Right ventricle myocardium superior (tissue), 1 donor: ENCODE measurements at regions of chr12 and their contacts with region 1.

Region 1: DNA sequence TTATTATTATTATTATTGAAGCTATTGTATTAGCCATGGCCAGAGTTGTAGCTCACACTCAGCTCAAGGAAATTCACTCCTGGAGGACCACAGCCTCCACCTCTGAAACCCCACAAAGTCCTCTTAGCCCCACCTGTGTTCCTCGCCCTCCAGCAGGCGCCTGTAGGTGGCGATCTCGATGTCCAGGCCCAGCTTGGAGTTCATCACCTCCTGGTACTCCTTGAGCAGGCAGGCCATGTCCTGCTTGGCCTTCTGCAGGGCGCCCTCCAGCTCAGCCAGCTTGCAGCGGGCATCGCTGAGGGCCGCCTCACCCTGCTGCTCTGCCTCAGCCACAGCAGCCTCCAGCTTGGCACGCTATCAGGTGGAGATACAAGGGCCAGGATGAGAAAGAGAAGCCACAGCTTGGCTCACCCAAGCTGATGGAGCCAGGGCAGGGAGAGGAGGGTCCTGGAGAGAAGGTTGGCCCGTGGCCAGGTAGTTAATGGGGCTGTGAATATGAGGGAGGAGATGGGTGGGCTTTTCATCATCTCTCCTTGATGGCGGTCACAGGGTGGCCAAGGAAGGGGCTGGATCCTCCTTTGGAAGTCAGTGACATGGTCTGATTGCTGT is 5.1 kb downstream of the KRT85 start:
- DNase-seq: no peak
- ATAC-seq: no peak

Region 2: GRCh38 chr12:52307836-52308805 is 54.1 kb before region 1 on chr12:
- intact Hi-C with region 1: no loop called
- DNase-seq: peak; percentile 69
- ATAC-seq: peak; percentile 96

Region 3: DNA sequence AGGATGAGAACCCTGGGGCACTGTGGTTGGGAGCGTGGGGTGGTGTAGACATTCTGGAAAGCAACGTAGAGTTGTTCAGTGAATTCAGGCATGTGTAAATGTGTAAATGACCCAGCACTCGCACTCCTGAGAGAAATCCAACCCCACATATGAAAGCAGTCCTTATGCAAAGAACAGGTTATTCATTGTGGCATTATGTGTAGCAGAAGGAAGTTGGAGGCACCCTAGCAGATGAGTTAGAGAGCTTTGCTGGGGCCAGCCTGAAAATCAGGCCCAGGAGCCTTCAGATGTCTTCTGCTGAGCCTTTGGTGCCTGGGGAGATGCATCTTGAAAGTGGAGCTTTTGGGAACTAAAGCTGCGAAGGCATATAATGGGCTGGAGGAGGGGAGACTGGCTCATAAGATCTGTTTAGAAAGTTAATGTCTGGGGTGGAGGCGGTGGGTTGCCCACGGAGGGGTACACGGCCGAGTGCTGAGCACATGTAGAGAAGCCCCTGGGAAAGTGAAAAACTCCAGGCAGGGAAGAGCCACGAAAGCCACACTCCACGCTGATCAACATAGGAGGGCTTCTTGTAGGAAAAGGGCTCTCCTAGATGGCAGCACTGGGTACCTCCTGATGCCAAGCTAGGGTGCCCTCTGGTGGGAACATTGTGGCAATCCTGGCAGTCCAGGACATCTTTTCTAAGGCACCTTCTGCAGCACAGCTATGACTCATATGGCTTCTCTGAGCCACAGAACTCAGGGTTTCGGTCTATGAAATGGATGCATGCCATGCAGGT is 35.0 kb before region 1 on chr12:
- intact Hi-C with region 1: no loop called
- DNase-seq: peak; percentile 61
- ATAC-seq: peak; percentile 93

Region 4: GRCh38 chr12:52395761-52396434 is 33.7 kb after region 1 on chr12:
- intact Hi-C with region 1: no loop called
- DNase-seq: peak; percentile 59
- ATAC-seq: no peak

Region 5: DNA sequence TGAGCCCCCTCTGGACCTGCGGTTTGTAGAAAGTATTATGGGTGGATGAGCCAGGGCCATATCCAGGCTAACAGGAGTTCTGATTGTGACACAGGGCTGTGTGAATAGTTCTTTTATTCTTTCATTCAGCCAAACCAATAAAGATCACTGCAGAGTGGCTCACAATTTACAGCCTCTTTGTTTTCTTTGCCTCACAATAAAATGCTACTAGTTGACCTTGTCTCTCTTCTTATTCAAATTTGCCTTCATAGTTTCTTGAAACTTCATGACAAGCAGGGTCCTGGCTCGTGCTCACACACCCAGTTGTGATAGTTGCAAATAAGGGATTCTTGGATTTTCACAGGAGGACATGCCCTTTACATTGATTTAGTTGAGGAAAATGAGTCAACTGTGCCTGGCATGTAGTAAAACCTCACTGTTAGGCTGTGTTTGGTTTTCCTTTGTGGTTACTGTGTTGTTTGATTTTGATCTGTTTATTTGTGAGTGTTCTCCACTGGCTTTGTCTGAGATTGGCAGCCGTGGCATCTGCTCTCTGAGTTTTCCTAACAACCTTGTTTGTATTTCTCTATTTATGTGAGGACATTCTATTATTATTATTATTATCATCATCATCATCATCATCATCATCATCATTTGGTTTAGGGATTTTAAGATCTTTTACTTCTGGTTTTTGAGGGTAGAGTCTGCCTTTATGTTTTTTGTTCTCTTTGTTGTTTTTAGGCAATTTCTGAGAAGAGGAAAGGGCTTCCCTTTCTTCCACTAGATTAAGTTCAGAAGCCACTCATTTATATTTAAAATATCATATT is 92.4 kb after region 1 on chr12:
- intact Hi-C with region 1: no loop called
- DNase-seq: no peak
- ATAC-seq: no peak

Region 6: GRCh38 chr12:52515927-52516831 is 154.0 kb after region 1 on chr12:
- intact Hi-C with region 1: loop called (anchors 10 kb)
- DNase-seq: no peak
- ATAC-seq: no peak